ENCODE measurements at regions of chr3 and their contacts with region 1.

Region 1: DNA sequence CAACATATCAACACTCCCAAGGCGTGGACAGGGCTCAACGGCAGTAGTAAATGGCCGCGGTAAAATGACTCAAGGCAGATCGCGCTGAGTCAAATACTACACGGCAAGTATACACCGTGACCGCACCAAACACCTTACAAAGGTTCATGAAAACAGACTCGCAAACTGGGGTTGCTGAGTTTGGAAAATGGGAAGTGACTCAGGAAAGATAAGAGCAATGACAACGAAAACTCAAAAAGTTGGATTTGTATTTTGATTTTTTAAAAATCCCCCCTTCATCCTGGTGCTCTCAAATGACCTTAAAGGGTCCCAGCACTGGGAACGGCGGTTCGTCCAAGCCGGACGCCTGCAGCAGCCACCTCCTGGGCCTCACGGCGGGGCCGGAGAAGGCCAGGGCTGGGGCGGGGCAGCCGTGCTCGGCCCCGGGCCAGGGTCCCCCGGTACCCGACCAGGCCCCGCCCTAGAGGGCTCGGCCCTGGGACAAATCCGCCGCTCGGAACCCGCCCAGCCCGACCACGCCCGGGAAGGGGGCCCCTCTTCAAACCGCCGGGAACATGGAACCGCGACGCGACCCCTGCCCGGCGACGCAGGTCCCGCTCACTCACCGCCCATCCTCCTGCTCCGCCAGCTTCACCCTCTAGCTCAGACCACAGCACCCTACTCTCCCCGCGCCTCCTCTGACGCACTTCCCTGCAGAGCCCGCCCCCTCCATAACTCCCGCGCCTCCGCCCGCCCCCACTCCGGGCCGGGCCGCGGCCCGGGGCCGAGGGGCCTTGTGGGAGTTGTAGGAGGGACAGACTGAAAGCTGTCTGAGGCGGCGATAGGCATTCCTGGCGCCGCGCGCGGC is at the start of gene CLDND1:
- DNase-seq: peak; percentile 97
- ATAC-seq: peak; percentile 98
- total RNA-seq, gene CLDND1: 47.5 to 70.9 TPM

Region 2: GRCh38 chr3:98172621-98173020 is 349.8 kb before region 1 on chr3:
- intact Hi-C with region 1: no loop called
- DNase-seq: no peak
- ATAC-seq: no peak

Region 3: GRCh38 chr3:98593046-98593936 is 70.8 kb after region 1 on chr3 and contains the start of gene CPOX:
- intact Hi-C with region 1: loop called in 1 of 2 experiments (anchors 10 kb)
- DNase-seq: peak; percentile 91 to 94
- ATAC-seq: peak; percentile 98
- total RNA-seq, gene CPOX: 15.6 to 16.3 TPM

Measured in left colon (tissue), 2 donors.